T-cell (primary cell): ENCODE measurements at regions of chr9 and their contacts with region 1.

Region 1: DNA sequence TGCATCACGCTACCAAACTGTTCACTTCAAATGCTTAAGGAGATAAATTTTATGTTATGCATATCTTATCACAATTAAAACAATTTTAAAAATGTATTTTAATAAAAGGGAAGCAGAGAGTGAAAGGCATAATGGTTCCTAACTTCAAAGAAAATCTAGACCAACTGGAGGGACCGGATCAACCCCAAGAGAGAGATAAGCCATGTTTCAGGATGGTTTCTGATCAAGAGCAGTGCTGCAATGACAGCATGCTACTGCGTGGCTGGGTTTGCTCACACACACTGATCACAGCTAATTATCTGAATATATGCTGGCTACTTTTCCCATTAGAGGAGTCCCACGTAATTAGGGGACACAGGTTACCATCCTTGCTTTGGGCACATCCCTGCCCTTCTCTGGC is 159.2 kb downstream of the TRIM32 start:
- DNase-seq: no peak
- ATAC-seq: no peak
- H3K4me3 ChIP-seq: no peak overlapping the region
- H3K4me3 Mint-ChIP-seq: no peak overlapping the region
- H3K27ac ChIP-seq: no peak overlapping the region
- H3K27ac Mint-ChIP-seq: no peak overlapping the region
- H3K4me1 ChIP-seq: no peaks in the 10 kb centered on the region
- H3K4me1 Mint-ChIP-seq: no peaks in the 10 kb centered on the region
- H3K27me3 ChIP-seq: no peaks in the 10 kb centered on the region
- H3K27me3 Mint-ChIP-seq: no peaks in the 10 kb centered on the region

Region 2: GRCh38 chr9:117458066-117458465 is 611.8 kb after region 1 on chr9:
- CTCF ChIA-PET with region 1: no interaction called
- POLR2A ChIA-PET with region 1: no interaction called
- DNase-seq: no peak
- ATAC-seq: no peak
- H3K4me3 ChIP-seq: no peak overlapping the region
- H3K4me3 Mint-ChIP-seq: no peak overlapping the region
- H3K27ac ChIP-seq: no peak overlapping the region
- H3K27ac Mint-ChIP-seq: no peak overlapping the region
- H3K4me1 ChIP-seq: no peaks in the 10 kb centered on the region
- H3K4me1 Mint-ChIP-seq: no peaks in the 10 kb centered on the region
- H3K27me3 ChIP-seq: no peaks in the 10 kb centered on the region
- H3K27me3 Mint-ChIP-seq: no peaks in the 10 kb centered on the region

Region 3: GRCh38 chr9:117839862-117840261 is 993.6 kb after region 1 on chr9:
- CTCF ChIA-PET with region 1: no interaction called
- POLR2A ChIA-PET with region 1: interaction called in 1 of 2 experiments, 12 read pairs
- DNase-seq: no peak
- ATAC-seq: no peak
- H3K4me3 ChIP-seq: no peak overlapping the region
- H3K4me3 Mint-ChIP-seq: no peak overlapping the region
- H3K27ac ChIP-seq: no peak overlapping the region
- H3K27ac Mint-ChIP-seq: no peak overlapping the region
- H3K4me1 ChIP-seq: no peaks in the 10 kb centered on the region
- H3K4me1 Mint-ChIP-seq: peaks cover 0 to 3% (median 2%) of the 10 kb centered on the region in 3 donors
- H3K27me3 ChIP-seq: no peaks in the 10 kb centered on the region
- H3K27me3 Mint-ChIP-seq: peaks cover 6 to 11% of the 10 kb centered on the region in 2 donors